Ovary (tissue), 10 donors: ENCODE measurements at regions of chr10 and their contacts with region 1.

Region 1: GRCh38 chr10:60816628-60817397 is 38.5 kb downstream of the CDK1 start:
- DNase-seq: peak in 3 of 5 donors; percentile 29 to 62 (median 31)
- H3K4me3 ChIP-seq: no peak overlapping the region
- H3K27ac ChIP-seq: no peak overlapping the region
- H3K4me1 ChIP-seq: no peaks in the 10 kb centered on the region
- H3K27me3 ChIP-seq: no peaks in the 10 kb centered on the region
- CTCF ChIP-seq: peak; percentile 45 to 86 (median 84)
- EP300 ChIP-seq: no peak
- POLR2A ChIP-seq: no peak

Region 2: GRCh38 chr10:60717852-60718251 is 99.0 kb before region 1 on chr10:
- intact Hi-C with region 1: no loop called
- DNase-seq: no peak
- H3K4me3 ChIP-seq: no peak overlapping the region
- H3K27ac ChIP-seq: peak overlapping the region in 1 of 2 donors; percentile 15
- H3K4me1 ChIP-seq: peaks cover 3% of the 10 kb centered on the region
- H3K27me3 ChIP-seq: no peaks in the 10 kb centered on the region
- CTCF ChIP-seq: no peak
- EP300 ChIP-seq: no peak
- POLR2A ChIP-seq: no peak

Region 3: DNA sequence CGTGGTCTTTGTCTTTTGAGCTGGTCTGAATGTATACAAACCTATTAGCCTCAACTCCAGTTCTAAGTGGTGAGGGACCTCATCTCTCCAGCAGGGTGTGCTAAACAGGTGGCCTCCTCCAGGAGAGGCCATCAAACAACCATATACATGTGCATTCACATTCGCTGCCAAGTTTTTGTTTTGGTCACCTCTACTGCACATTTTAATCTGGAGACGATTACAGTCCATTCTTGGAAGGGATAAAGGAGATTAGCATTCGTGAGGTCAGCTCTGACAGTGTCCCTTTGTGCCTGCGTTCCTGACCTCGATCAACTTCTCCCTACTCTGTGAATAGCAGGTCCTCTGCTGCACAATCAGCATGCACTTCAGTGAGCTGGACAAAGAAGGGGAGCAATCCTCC is 66.4 kb after region 1 on chr10:
- intact Hi-C with region 1: loop called in 1 of 4 experiments (anchors 10 kb)
- DNase-seq: no peak
- H3K4me3 ChIP-seq: no peak overlapping the region
- H3K27ac ChIP-seq: no peak overlapping the region
- H3K4me1 ChIP-seq: peaks cover 2% of the 10 kb centered on the region
- H3K27me3 ChIP-seq: no peaks in the 10 kb centered on the region
- CTCF ChIP-seq: no peak
- EP300 ChIP-seq: no peak
- POLR2A ChIP-seq: no peak

Region 4: DNA sequence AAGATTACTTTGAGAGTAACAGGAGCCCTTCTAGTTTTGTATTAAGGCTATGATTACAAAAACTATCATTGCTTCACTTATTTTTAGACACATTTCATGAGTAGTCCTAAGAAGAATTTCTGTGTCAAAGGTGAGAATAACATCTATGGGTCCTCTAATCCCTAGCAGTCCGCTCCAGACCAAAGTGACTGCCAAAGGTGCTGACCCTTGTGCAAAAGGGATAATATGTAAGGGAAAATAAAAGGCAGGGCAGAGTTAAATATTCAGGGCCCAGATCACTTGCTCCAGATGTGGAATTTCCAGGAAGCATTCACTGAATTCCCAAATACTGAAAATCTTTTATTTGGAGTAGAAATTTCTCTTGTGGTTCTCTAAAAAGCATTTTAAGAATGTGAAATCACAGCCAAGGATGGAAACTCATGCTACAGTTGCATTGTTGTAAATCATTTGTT is 97.9 kb after region 1 on chr10:
- intact Hi-C with region 1: no loop called
- DNase-seq: peak; percentile 58 to 87 (median 78)
- H3K4me3 ChIP-seq: no peak overlapping the region
- H3K27ac ChIP-seq: no peak overlapping the region
- H3K4me1 ChIP-seq: peaks cover 13% of the 10 kb centered on the region
- H3K27me3 ChIP-seq: no peaks in the 10 kb centered on the region
- CTCF ChIP-seq: no peak
- EP300 ChIP-seq: no peak
- POLR2A ChIP-seq: no peak

Region 5: DNA sequence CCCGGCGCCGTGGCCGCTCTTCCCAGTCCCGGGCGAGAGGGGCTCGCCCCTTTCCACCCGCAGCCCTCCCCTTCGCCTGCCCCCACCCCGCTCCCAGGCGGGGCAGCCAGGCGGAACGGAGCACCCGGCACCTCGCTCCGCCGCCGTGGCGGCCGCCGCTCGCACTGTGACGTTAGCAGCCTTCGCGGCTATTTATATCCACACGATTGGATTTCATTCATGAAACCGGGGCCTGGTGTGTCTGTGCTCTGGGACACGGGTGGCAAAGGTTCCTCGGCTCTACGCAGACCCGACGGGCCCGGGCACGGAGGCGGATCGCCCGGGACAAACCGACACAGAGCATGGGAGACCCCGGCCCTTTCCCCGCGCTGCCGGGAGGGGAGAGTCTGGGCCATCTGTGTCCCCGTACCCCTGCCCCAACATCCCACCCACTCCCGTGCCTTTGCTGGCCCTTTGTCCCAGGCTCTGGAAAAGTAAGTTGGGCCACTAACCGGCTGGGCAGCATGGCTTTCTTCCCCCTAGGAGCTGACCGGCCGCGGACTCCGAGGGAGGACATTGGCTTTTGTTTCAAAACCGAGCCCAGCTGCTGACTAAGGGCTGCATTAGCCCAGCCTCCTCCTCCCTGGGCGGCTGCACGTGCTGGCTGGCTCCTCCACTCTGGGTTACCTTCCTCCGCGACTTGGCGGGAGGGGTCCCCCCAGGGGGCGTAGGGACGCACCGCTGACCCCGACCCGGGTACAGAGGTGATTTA is 127.5 kb after region 1 on chr10 and contains the start of gene RHOBTB1:
- intact Hi-C with region 1: loop called in 1 of 4 experiments (anchors 10 kb)
- DNase-seq: peak; percentile 77 to 86 (median 80)
- H3K4me3 ChIP-seq: peak within 1 kb of the TSS; percentile 85
- H3K27ac ChIP-seq: peak within 1 kb of the TSS; percentile 91 to 95
- H3K4me1 ChIP-seq: no peaks in the 10 kb centered on the region
- H3K27me3 ChIP-seq: no peaks in the 10 kb centered on the region
- CTCF ChIP-seq: no peak
- EP300 ChIP-seq: no peak
- POLR2A ChIP-seq: peak; percentile 84
- total RNA-seq, gene RHOBTB1: 5.6 to 23.9 (median 13.0) TPM

Region 6: GRCh38 chr10:60964257-60965235 is 147.7 kb after region 1 on chr10:
- intact Hi-C with region 1: loop called (anchors 2 to 5 kb)
- DNase-seq: peak; percentile 62 to 80 (median 68)
- H3K4me3 ChIP-seq: no peak overlapping the region
- H3K27ac ChIP-seq: peak overlapping the region in 1 of 2 donors; percentile 16
- H3K4me1 ChIP-seq: no peaks in the 10 kb centered on the region
- H3K27me3 ChIP-seq: no peaks in the 10 kb centered on the region
- CTCF ChIP-seq: peak; percentile 70 to 85 (median 73)
- EP300 ChIP-seq: no peak
- POLR2A ChIP-seq: no peak

Region 7: DNA sequence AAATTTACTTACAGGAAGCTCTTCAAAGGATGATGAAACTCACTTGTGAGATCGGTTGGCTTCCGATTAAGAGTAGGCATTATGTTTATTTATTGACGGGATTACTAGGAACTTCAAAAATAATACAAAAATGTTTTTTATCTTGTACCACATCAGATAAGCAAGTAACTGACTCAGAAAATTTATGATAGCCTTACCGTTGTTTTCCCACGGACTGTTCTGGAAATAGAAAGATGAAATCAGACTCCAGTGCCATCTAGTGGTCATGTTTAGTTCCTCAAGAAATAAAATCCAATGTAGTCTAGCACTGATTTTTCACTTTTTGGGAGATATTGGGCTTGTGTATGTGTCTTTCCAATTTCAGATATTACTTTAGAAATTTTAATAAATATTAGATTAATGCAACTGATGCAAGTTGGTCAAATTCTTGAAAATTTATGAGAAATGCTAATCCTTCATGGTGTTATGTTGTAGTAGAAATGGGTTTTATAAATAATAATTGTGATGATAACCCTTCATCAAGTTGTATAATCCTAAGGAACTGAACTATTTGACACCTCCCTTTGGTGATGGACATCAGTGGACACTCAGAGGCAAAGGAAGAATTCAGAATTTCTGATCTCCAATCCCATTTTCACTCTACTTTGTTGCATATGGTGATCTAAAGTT is 467.5 kb after region 1 on chr10:
- intact Hi-C with region 1: loop called in 3 of 4 experiments (anchors 5 to 10 kb)
- DNase-seq: no peak
- H3K4me3 ChIP-seq: no peak overlapping the region
- H3K27ac ChIP-seq: no peak overlapping the region
- H3K4me1 ChIP-seq: no peaks in the 10 kb centered on the region
- H3K27me3 ChIP-seq: no peaks in the 10 kb centered on the region
- CTCF ChIP-seq: peak; percentile 49 to 75 (median 67)
- EP300 ChIP-seq: no peak
- POLR2A ChIP-seq: no peak

Region 8: DNA sequence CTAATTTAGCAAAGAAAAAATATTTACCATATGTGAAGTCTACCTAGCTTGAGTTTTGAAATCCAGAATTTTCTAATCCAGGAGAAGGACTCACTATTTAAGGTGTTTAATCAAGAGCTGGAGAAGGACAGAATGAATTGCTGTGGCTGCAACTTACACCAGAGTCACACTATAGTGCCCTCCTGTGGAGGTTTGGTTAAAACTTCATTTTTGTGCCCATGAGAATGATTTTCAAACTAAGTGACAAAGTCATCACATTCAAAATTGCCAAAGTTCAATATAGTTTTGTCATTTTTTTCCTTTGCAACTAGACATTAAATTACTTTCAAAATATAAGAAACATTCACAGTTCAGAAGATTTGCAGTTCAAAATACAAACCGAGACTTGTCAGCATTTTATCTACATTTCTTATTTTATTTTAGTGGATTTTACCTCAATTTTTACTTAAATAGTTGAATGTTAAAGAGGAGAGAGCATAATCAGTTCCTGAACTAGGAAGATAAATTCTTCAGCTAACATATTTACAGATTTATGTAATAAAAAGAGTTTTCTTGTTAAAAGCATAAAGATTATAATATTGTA is 916.6 kb after region 1 on chr10:
- intact Hi-C with region 1: loop called in 1 of 4 experiments (anchors 10 kb)
- DNase-seq: peak in 1 of 5 donors; percentile 17
- H3K4me3 ChIP-seq: no peak overlapping the region
- H3K27ac ChIP-seq: no peak overlapping the region
- H3K4me1 ChIP-seq: no peaks in the 10 kb centered on the region
- H3K27me3 ChIP-seq: no peaks in the 10 kb centered on the region
- CTCF ChIP-seq: peak in 2 of 3 donors; percentile 12 to 32
- EP300 ChIP-seq: no peak
- POLR2A ChIP-seq: no peak